ENCODE measurements at regions of chr11 and their contacts with region 1.

Region 1: DNA sequence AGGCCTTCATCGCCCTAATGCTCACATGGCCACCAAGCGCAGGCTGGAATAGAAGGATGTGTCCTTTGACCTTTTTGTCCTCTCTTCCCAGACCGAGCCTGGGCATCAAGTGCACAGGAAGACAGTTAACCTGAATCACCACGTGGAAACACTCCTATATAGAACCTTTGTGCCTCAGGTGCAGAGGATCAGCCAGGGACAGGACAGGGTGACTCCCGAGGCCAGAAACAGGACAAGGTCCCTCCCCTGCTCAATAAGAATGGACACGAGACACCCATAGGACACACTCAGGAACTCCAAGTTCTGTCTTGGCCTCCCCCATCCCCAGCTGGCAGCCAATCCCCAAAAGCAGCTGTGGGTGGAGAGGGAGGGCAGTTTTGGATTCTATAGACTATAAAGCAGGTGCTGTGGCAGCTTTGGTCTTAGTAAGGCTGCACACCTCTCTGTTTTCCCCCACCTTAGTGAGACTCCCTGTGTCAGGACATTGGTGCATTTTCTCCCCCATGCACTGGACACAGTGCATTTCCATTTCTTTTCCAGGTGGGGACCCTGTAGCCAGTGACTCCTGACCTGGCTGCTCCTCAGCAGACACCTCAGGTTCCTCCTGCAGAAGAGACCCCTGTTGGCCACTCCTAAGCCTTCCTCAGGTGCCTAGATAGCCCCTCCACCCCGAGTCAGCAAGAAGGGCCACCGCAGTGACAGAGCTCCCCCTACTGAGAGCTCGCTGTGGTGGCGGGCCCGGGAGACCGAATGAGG is 43.6 kb upstream of the POU2AF1 start:
- DNase-seq: peak; percentile 62
- CTCF ChIP-seq: peak; percentile 92

Region 2: GRCh38 chr11:111124724-111125123 is 297.9 kb before region 1 on chr11:
- in situ Hi-C with region 1: no loop called
- DNase-seq: no peak
- CTCF ChIP-seq: no peak

Region 3: GRCh38 chr11:111370902-111371578 is 51.6 kb before region 1 on chr11:
- in situ Hi-C with region 1: loop called (anchors 5 kb)
- DNase-seq: no peak
- CTCF ChIP-seq: no peak